ENCODE measurements at regions of chr10 and their contacts with region 1.

Region 1: GRCh38 chr10:51937308-51938135 is 238.1 kb upstream of the CSTF2T start:
- DNase-seq: peak; percentile 91
- ATAC-seq: peak; percentile 96
- H3K4me3 ChIP-seq: peak overlapping the region; percentile 4; the same call in 1 of the 2 replicates
- H3K27ac ChIP-seq: peak overlapping the region; percentile 26; the same call in 1 of the 2 replicates
- H3K4me1 ChIP-seq: no peaks in the 10 kb centered on the region; the same call in 1 of the 2 replicates
- H3K27me3 ChIP-seq: no peaks in the 10 kb centered on the region
- CTCF ChIP-seq: no peak
- POLR2A ChIP-seq: no peak
- RAD21 ChIP-seq: no peak; the same call in 1 of the 2 replicates

Region 2: GRCh38 chr10:51654918-51655317 is 282.6 kb before region 1 on chr10:
- CTCF ChIA-PET with region 1: no interaction called
- POLR2A ChIA-PET with region 1: no interaction called
- dilution Hi-C with region 1: no loop called
- in situ Hi-C with region 1: no loop called
- intact Hi-C with region 1: loop called (anchors 5 kb)
- DNase-seq: no peak
- ATAC-seq: no peak
- H3K4me3 ChIP-seq: no peak overlapping the region
- H3K27ac ChIP-seq: no peak overlapping the region
- H3K4me1 ChIP-seq: peaks cover 4% of the 10 kb centered on the region; the same call in 1 of the 2 replicates
- H3K27me3 ChIP-seq: no peaks in the 10 kb centered on the region
- CTCF ChIP-seq: no peak
- POLR2A ChIP-seq: no peak
- RAD21 ChIP-seq: no peak

Region 3: DNA sequence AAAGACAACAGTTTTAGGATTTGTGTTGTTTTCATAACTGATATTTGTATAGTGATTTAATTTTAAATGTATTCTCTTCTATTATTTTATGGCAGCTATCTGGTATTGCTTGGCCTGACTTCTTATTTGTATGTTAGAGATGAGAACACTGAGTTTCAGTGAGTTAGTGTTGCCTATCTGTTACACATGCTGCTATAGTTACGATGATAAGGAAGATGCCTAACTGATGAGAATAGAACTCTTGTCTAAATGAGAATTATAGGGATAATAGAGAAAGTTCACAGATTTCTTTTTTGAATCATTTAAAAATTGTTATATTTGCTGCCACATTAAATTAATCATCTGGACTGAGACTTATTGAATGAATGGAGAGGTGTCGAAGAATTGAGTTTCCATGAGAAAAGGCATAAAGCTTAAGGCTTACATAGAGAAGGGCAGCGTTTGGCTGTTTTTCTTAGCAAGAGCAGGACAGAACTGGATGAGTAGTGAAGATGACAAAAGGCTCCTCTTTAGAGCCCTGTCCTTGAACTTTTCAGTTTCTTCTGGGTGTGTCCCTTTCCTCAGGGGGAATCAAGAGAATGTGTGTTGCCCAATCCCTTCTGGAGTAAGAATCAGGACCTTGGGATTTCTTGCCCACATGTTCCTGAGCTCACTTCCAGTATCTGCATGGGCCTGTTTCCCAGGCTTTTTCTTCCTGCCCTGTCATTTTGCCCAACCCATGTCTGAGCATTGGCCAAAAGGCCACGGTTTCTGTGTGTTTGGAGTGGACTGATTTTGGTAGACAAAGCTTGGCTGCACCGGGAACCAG is 42.5 kb before region 1 on chr10:
- CTCF ChIA-PET with region 1: no interaction called
- POLR2A ChIA-PET with region 1: no interaction called
- dilution Hi-C with region 1: no loop called
- in situ Hi-C with region 1: no loop called
- intact Hi-C with region 1: loop called (anchors 5 kb)
- DNase-seq: peak; percentile 73
- ATAC-seq: peak; percentile 42
- H3K4me3 ChIP-seq: no peak overlapping the region
- H3K27ac ChIP-seq: no peak overlapping the region
- H3K4me1 ChIP-seq: peaks cover 4% of the 10 kb centered on the region; the same call in 1 of the 2 replicates
- H3K27me3 ChIP-seq: no peaks in the 10 kb centered on the region
- CTCF ChIP-seq: no peak
- POLR2A ChIP-seq: no peak
- RAD21 ChIP-seq: no peak

Measured in IMR-90 (cell line).